ENCODE measurements at regions of chr20 and their contacts with region 1.

Region 1: DNA sequence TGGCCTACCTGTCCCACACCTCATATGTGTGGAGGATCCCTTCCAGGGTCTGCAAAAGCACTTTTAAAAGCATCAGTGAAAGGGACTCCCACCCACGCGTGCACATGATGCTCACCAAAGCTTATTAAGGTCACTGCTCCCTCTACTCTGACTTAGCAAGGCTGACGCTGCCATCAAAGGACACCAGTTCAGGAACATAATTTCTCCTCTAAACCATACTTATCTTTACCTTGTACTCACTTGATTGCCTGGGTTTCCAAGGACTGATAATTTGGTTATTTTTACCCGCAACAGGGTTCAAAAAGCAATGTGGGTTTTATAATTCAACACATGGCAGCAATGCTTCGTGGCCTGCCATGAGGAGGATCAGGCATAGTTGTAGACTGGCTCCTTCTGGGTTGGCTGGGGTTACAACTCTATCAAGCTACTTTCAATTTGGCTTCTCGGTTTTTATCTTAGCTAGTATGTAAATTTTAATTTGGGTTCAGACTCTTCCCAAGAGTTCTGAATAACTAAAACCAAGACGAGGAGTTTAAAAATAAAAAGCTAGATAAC is 52.2 kb upstream of the EMILIN3 start:
- DNase-seq: no peak
- ATAC-seq: no peak
- H3K4me3 ChIP-seq: no peak overlapping the region
- H3K27ac ChIP-seq: no peak overlapping the region
- H3K4me1 ChIP-seq: peaks cover 0 to 8% of the 10 kb centered on the region in 2 experiments; a peak in 2 of 5 replicates
- H3K27me3 ChIP-seq: no peaks in the 10 kb centered on the region
- CTCF ChIP-seq: no peak
- EP300 ChIP-seq: no peak
- POLR2A ChIP-seq: no peak
- RAD21 ChIP-seq: no peak

Region 2: GRCh38 chr20:41249406-41250281 is 169.2 kb before region 1 on chr20:
- CTCF ChIA-PET with region 1: no interaction called
- POLR2A ChIA-PET with region 1: interaction called, 3 read pairs
- in situ Hi-C with region 1: no loop called
- intact Hi-C with region 1: loop called (anchors 5 kb)
- DNase-seq: peak; percentile 20 to 58 (median 49)
- ATAC-seq: peak; percentile 92
- H3K4me3 ChIP-seq: no peak overlapping the region
- H3K27ac ChIP-seq: no peak overlapping the region
- H3K4me1 ChIP-seq: peaks cover 0 to 2% of the 10 kb centered on the region in 2 experiments; a peak in 3 of 5 replicates
- H3K27me3 ChIP-seq: no peaks in the 10 kb centered on the region; a peak in 1 of 5 replicates
- CTCF ChIP-seq: peak; percentile 67 to 74 (median 68)
- EP300 ChIP-seq: no peak
- POLR2A ChIP-seq: no peak
- RAD21 ChIP-seq: peak; percentile 80 to 83

Region 3: GRCh38 chr20:41499961-41500725 is 81.3 kb after region 1 on chr20:
- CTCF ChIA-PET with region 1: no interaction called
- POLR2A ChIA-PET with region 1: no interaction called
- in situ Hi-C with region 1: no loop called
- intact Hi-C with region 1: no loop called
- DNase-seq: no peak
- ATAC-seq: no peak
- H3K4me3 ChIP-seq: no peak overlapping the region
- H3K27ac ChIP-seq: no peak overlapping the region
- H3K4me1 ChIP-seq: no peaks in the 10 kb centered on the region
- H3K27me3 ChIP-seq: no peaks in the 10 kb centered on the region
- CTCF ChIP-seq: no peak
- EP300 ChIP-seq: no peak
- POLR2A ChIP-seq: no peak
- RAD21 ChIP-seq: no peak

Measured in K562 (cell line).